ENCODE measurements at regions of chr3 and their contacts with region 1.

Region 1: DNA sequence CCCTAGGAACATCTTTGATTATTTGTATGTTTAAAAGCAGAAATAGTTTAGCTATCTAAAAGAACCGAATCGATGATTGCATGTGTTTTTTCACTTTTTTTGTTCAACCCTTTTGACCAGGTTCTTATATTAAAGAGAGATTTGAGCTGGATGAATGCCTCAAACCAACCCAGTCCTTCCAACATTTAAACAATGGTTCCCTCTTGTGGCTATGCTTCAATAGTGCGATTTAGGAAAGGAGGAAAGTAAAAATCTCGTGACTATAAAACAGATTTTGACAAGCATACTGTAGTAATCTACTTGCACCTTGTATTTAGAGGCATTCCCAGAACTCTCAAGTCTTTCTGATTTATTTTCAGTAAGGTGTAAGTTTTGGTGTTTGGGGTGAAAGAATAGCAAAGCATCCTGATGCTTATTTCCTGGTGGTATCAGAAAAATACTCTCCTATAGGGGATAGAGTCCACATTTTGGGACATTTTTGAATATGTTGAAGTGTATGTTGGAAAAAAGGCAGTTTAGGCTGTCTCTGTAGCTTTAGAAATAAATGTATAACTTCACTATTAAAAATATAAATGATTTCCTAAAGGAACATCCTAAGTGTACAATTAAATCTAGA is 159.6 kb upstream of the KCNH8 start:
- DNase-seq: no peak
- H3K4me3 ChIP-seq: no peak overlapping the region
- H3K27ac ChIP-seq: no peak overlapping the region
- H3K4me1 ChIP-seq: no peaks in the 10 kb centered on the region
- H3K27me3 ChIP-seq: no peaks in the 10 kb centered on the region
- CTCF ChIP-seq: peak; percentile 86

Region 2: DNA sequence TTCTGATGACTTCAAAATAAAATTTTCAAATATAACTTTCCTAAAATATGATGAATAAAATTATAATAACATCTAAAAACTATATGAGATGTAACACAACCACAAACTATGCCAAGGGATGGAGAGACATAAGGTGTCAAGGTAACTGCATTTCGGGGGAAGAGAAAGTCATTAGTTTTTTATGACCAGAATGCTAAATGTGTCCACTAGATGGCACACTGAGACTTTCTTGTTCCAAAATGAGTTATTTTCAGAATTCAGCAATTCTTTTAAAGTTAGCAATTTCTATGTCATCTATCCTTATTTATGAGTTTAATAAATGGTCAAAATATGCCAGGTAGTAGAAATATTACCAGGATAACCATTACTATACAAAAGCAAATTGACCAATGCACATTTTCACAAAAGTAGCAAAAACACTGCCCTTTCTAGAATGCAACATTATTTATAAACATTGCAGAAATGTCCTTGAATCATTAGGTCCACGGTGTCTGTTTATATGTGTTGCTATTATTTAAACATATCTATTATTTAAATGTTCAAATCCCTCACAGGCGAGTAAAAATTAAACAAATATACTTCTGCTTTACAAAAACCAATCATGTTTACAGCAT is 1729.8 kb before region 1 on chr3:
- CTCF ChIA-PET with region 1: no interaction called
- POLR2A ChIA-PET with region 1: no interaction called
- intact Hi-C with region 1: loop called (anchors 1 kb)
- DNase-seq: no peak
- H3K4me3 ChIP-seq: no peak overlapping the region
- H3K27ac ChIP-seq: no peak overlapping the region
- H3K4me1 ChIP-seq: no peaks in the 10 kb centered on the region
- H3K27me3 ChIP-seq: no peaks in the 10 kb centered on the region
- CTCF ChIP-seq: peak; percentile 88

Region 3: GRCh38 chr3:18559331-18559842 is 429.3 kb before region 1 on chr3:
- CTCF ChIA-PET with region 1: interaction called, 3 read pairs
- POLR2A ChIA-PET with region 1: no interaction called
- intact Hi-C with region 1: loop called (anchors 2 kb)
- DNase-seq: peak in 1 of 2 experiments; percentile 10
- H3K4me3 ChIP-seq: no peak overlapping the region
- H3K27ac ChIP-seq: no peak overlapping the region
- H3K4me1 ChIP-seq: 0 out of 2 replicates have a peak, but pooled peaks cover 6% of the 10 kb centered on the region
- H3K27me3 ChIP-seq: no peaks in the 10 kb centered on the region
- CTCF ChIP-seq: peak; percentile 87

Region 4: GRCh38 chr3:18847583-18848197 is 141.0 kb before region 1 on chr3:
- CTCF ChIA-PET with region 1: no interaction called
- POLR2A ChIA-PET with region 1: no interaction called
- intact Hi-C with region 1: loop called (anchors 10 kb)
- DNase-seq: no peak
- H3K4me3 ChIP-seq: no peak overlapping the region
- H3K27ac ChIP-seq: no peak overlapping the region
- H3K4me1 ChIP-seq: no peaks in the 10 kb centered on the region
- H3K27me3 ChIP-seq: no peaks in the 10 kb centered on the region
- CTCF ChIP-seq: peak; percentile 72

Region 5: DNA sequence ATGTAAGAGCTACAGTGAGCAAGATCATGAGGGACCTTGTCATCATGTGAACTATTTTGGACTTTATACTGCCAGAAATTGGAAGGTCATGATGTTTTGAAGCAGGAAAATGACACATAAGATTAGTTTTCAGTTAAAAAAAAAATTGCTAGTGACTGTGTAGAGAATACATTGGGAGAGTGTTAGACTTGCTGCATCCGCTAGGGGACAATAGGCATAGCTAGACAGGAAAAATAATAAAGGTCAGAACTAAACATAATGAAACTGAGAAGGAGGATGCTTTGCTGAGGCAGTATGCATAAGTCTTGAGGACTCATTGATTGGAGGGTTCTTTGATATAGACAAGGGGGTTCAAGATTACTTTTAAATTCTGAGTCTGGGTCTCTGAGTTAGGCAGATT is 116.3 kb before region 1 on chr3:
- CTCF ChIA-PET with region 1: no interaction called
- POLR2A ChIA-PET with region 1: no interaction called
- intact Hi-C with region 1: no loop called
- DNase-seq: no peak
- H3K4me3 ChIP-seq: no peak overlapping the region
- H3K27ac ChIP-seq: no peak overlapping the region
- H3K4me1 ChIP-seq: no peaks in the 10 kb centered on the region
- H3K27me3 ChIP-seq: no peaks in the 10 kb centered on the region
- CTCF ChIP-seq: no peak

Measured in PC-9 (cell line).